ENCODE measurements at regions of chr7 and their contacts with region 1.

Region 1: DNA sequence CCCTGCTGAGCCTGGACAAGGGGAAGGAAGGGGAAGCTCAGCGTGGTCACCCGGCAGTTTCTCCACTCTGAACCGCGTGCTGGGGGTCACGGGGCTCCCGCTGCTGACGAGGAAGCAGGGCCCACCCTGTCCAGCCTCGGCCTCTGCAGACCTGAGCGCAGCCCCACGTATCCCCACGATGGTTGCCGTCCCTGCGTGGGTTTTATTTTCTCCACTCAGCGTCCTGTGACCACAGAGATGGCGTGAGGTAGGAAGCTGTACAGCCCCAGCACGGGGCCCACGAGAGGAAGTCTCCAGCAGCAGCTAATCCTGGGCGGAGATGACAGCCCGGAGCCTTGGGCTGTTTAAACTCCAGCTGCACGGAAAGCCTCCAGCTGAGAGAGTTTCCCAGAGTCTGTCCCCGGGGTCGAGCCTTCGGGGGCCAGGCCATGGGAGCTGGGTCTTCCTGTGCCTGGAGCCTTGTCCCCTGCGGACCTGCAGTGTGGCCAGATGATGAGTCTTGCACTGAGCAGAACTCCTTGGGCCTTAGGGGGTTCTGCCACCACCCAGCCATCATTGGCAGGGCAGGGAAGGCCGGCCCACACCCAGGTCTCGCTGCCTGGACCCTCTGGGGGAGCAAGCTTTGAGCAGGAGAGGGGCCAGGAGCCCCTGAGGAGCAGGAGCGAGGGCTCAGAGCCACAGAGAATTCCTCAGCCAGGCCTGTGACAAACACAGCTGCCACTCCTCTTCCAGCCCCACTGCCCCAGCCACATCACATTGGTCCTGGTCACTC is 72.8 kb upstream of the FAM20C start:
- DNase-seq: no peak
- ATAC-seq: no peak; the same call in 2 of the 3 replicates
- H3K4me3 ChIP-seq: no peak overlapping the region
- H3K27ac ChIP-seq: no peak overlapping the region
- H3K4me1 ChIP-seq: peaks cover 10% of the 10 kb centered on the region
- H3K27me3 ChIP-seq: peaks cover 2 to 48% of the 10 kb centered on the region in 2 experiments; a peak in 4 of 5 replicates
- CTCF ChIP-seq: no peak
- EP300 ChIP-seq: no peak
- POLR2A ChIP-seq: no peak
- RAD21 ChIP-seq: no peak

Region 2: GRCh38 chr7:129366-130221 is 10.0 kb after region 1 on chr7:
- CTCF ChIA-PET with region 1: no interaction called
- POLR2A ChIA-PET with region 1: no interaction called
- in situ Hi-C with region 1: no loop called
- intact Hi-C with region 1: no loop called
- DNase-seq: no peak
- ATAC-seq: no peak
- H3K4me3 ChIP-seq: no peak overlapping the region
- H3K27ac ChIP-seq: no peak overlapping the region
- H3K4me1 ChIP-seq: no peaks in the 10 kb centered on the region
- H3K27me3 ChIP-seq: peaks cover 4 to 23% of the 10 kb centered on the region in 2 experiments; a peak in 3 of 5 replicates
- CTCF ChIP-seq: no peak
- EP300 ChIP-seq: no peak
- POLR2A ChIP-seq: no peak
- RAD21 ChIP-seq: no peak

Region 3: DNA sequence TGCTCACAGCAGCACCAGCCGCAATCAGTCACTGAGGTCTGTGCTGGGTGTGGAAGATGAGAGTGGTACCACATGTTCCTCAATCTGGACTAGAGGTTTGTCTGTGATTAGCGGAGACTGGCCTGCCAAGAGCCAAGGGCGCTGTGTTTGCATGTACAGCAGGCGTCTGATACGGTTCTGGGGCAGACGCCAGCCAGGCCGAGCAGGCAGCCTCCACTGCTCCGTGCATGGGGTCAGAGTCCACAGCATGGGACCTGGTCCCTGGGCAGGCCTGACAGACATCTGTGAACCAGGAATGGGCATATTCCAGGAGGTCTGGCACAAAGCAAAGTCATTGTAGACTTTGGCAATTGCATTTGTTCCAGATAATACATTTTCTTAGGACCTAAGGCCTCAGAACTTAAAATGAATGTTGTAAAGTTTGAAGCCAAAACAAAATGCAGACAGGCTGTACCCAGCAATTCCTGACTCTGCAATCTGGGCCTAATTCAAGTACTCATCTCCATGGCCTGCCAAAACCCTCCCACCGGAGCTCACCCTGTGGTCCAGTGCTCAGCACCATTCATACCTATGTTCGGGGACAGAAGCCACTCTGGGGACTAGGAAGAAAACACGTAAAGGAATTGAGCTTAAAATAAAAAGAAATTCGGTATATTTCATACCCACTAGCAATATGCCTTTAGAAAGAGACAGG is 22.8 kb after region 1 on chr7:
- CTCF ChIA-PET with region 1: no interaction called
- POLR2A ChIA-PET with region 1: no interaction called
- in situ Hi-C with region 1: no loop called
- intact Hi-C with region 1: loop called (anchors 2 kb)
- DNase-seq: peak; percentile 69
- ATAC-seq: peak; percentile 99
- H3K4me3 ChIP-seq: no peak overlapping the region; a peak in 1 of 6 replicates
- H3K27ac ChIP-seq: no peak overlapping the region
- H3K4me1 ChIP-seq: peaks cover 24% of the 10 kb centered on the region
- H3K27me3 ChIP-seq: peaks cover 0 to 10% of the 10 kb centered on the region in 2 experiments; a peak in 3 of 5 replicates
- CTCF ChIP-seq: no peak
- EP300 ChIP-seq: no peak
- POLR2A ChIP-seq: no peak
- RAD21 ChIP-seq: no peak

Region 4: GRCh38 chr7:322111-322671 is 202.6 kb after region 1 on chr7:
- CTCF ChIA-PET with region 1: no interaction called
- POLR2A ChIA-PET with region 1: no interaction called
- in situ Hi-C with region 1: no loop called
- intact Hi-C with region 1: no loop called
- DNase-seq: no peak
- ATAC-seq: peak; percentile 65
- H3K4me3 ChIP-seq: peak overlapping the region in 1 of 3 experiments; percentile 12; a peak in 1 of 6 replicates
- H3K27ac ChIP-seq: no peak overlapping the region
- H3K4me1 ChIP-seq: peaks cover 74% of the 10 kb centered on the region
- H3K27me3 ChIP-seq: peaks cover 3 to 58% of the 10 kb centered on the region in 2 experiments; a peak in 4 of 5 replicates
- CTCF ChIP-seq: peak; percentile 88
- EP300 ChIP-seq: no peak
- POLR2A ChIP-seq: no peak
- RAD21 ChIP-seq: peak; percentile 94